ENCODE measurements at regions of chr9 and their contacts with region 1.

Region 1: GRCh38 chr9:79129865-79130480 is 441.8 kb upstream of the TLE4 start:
- DNase-seq: peak in 1 of 2 donors; percentile 19
- ATAC-seq: no peak
- H3K4me3 ChIP-seq: no peak overlapping the region
- H3K4me3 Mint-ChIP-seq: no peak overlapping the region
- H3K27ac ChIP-seq: no peak overlapping the region
- H3K27ac Mint-ChIP-seq: no peak overlapping the region
- H3K4me1 ChIP-seq: no peaks in the 10 kb centered on the region
- H3K4me1 Mint-ChIP-seq: no peaks in the 10 kb centered on the region
- H3K27me3 ChIP-seq: no peaks in the 10 kb centered on the region
- H3K27me3 Mint-ChIP-seq: no peaks in the 10 kb centered on the region
- CTCF ChIP-seq: no peak

Region 2: DNA sequence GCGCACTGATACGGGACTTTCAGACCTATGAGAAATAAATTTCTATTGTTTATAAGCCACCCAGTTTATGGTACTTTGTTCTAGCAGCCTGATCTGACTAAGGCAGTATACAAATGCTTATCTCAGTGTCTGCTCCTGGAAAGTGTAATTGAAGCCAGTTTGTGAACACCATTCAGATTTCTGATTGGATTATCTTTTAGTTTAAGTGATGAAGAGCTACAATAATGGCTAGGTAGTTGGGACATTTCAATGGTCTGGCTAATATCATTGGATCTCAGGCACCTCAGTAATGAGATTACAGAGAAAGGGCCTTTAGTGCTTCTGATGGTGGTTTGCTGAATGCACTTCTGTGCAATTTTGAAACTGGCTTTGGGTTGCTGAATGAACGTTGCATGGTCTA is 699.6 kb before region 1 on chr9:
- intact Hi-C with region 1: loop called (anchors 5 kb)
- DNase-seq: no peak
- ATAC-seq: no peak
- H3K4me3 ChIP-seq: no peak overlapping the region
- H3K4me3 Mint-ChIP-seq: no peak overlapping the region
- H3K27ac ChIP-seq: no peak overlapping the region
- H3K27ac Mint-ChIP-seq: no peak overlapping the region
- H3K4me1 ChIP-seq: no peaks in the 10 kb centered on the region
- H3K4me1 Mint-ChIP-seq: no peaks in the 10 kb centered on the region
- H3K27me3 ChIP-seq: no peaks in the 10 kb centered on the region
- H3K27me3 Mint-ChIP-seq: peaks cover 3 to 19% of the 10 kb centered on the region in 2 donors
- CTCF ChIP-seq: no peak

Region 3: DNA sequence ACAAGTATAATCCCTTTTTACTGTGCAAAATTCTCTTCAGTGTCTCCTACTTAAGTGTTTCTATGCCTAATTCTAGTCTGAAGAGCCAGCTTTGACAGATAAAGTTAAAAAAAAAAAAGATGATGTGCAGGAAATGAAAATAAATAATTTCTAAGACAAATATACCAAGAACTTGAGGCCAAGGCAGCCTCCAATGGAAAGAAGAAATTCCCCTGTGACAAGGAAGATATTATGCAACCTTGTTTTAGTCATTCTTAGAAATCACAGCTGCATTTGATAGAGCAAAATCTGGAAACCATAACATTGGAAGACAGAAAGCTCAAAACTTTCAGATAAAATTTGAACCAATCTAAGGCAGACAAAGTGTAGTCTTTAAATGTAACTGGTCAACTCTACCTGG is 65.9 kb after region 1 on chr9:
- intact Hi-C with region 1: no loop called
- DNase-seq: no peak
- ATAC-seq: no peak
- H3K4me3 ChIP-seq: no peak overlapping the region
- H3K4me3 Mint-ChIP-seq: no peak overlapping the region
- H3K27ac ChIP-seq: no peak overlapping the region
- H3K27ac Mint-ChIP-seq: no peak overlapping the region
- H3K4me1 ChIP-seq: no peaks in the 10 kb centered on the region
- H3K4me1 Mint-ChIP-seq: no peaks in the 10 kb centered on the region
- H3K27me3 ChIP-seq: no peaks in the 10 kb centered on the region
- H3K27me3 Mint-ChIP-seq: peaks cover 8 to 13% of the 10 kb centered on the region in 2 donors
- CTCF ChIP-seq: no peak

Measured in natural killer cell (primary cell).